ENCODE measurements at regions of chr14 and their contacts with region 1.

Region 1: GRCh38 chr14:71855399-71856036 is 76.7 kb upstream of the RGS6 start:
- DNase-seq: peak in 1 of 2 experiments; percentile 58
- H3K4me3 ChIP-seq: no peak overlapping the region
- H3K27ac ChIP-seq: no peak overlapping the region
- H3K4me1 ChIP-seq: no peaks in the 10 kb centered on the region
- H3K27me3 ChIP-seq: no peaks in the 10 kb centered on the region
- CTCF ChIP-seq: peak; percentile 73

Region 2: DNA sequence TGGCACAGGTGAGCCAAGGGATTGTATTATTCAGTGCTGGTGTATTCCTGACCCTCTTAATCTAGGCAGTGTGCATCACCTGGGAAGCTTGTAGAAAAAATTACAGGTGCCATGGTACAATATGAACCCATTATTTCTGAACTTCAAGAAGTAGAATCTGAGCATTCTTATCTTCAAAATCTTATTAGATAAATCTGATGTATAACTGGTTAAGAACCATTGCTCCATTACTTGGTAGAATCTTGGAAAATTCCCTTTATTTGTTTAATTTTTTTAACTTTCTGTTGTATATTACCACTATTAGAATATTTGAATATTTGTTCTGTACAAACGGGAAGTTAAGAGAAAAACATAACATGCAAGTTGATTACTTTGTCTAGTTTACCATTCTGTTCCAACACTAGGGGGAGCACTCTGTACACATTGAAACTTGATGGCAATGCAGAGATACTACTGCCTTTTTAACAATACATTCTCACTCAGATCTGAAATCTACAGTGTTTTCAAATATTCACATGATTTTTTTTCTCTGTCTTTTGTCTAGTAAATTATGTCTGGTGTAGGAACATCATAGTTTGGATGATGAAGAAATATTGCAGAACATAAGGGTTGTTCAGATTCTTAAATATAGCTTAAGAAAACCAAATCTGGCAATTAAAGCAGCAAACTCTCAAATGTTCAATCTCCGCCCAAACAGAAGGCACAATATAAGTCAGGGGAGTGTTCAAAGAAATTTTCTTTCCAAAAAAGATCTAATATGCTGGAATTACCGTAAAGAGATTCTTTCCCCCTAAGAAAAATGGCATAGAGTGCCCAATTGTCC is 751.6 kb before region 1 on chr14:
- CTCF ChIA-PET with region 1: interaction called, 4 read pairs
- POLR2A ChIA-PET with region 1: no interaction called
- intact Hi-C with region 1: loop called (anchors 10 kb)
- DNase-seq: peak in 1 of 2 experiments; percentile 63
- H3K4me3 ChIP-seq: no peak overlapping the region
- H3K27ac ChIP-seq: no peak overlapping the region
- H3K4me1 ChIP-seq: no peaks in the 10 kb centered on the region
- H3K27me3 ChIP-seq: no peaks in the 10 kb centered on the region
- CTCF ChIP-seq: peak; percentile 97

Region 3: GRCh38 chr14:71382288-71382687 is 473.2 kb before region 1 on chr14:
- CTCF ChIA-PET with region 1: no interaction called
- POLR2A ChIA-PET with region 1: no interaction called
- intact Hi-C with region 1: no loop called
- DNase-seq: no peak
- H3K4me3 ChIP-seq: no peak overlapping the region
- H3K27ac ChIP-seq: no peak overlapping the region
- H3K4me1 ChIP-seq: no peaks in the 10 kb centered on the region; the same call in 1 of the 2 replicates
- H3K27me3 ChIP-seq: no peaks in the 10 kb centered on the region
- CTCF ChIP-seq: no peak

Region 4: GRCh38 chr14:71472043-71472960 is 383.2 kb before region 1 on chr14:
- CTCF ChIA-PET with region 1: no interaction called
- POLR2A ChIA-PET with region 1: no interaction called
- intact Hi-C with region 1: no loop called
- DNase-seq: no peak
- H3K4me3 ChIP-seq: no peak overlapping the region
- H3K27ac ChIP-seq: no peak overlapping the region
- H3K4me1 ChIP-seq: no peaks in the 10 kb centered on the region
- H3K27me3 ChIP-seq: no peaks in the 10 kb centered on the region
- CTCF ChIP-seq: no peak

Region 5: DNA sequence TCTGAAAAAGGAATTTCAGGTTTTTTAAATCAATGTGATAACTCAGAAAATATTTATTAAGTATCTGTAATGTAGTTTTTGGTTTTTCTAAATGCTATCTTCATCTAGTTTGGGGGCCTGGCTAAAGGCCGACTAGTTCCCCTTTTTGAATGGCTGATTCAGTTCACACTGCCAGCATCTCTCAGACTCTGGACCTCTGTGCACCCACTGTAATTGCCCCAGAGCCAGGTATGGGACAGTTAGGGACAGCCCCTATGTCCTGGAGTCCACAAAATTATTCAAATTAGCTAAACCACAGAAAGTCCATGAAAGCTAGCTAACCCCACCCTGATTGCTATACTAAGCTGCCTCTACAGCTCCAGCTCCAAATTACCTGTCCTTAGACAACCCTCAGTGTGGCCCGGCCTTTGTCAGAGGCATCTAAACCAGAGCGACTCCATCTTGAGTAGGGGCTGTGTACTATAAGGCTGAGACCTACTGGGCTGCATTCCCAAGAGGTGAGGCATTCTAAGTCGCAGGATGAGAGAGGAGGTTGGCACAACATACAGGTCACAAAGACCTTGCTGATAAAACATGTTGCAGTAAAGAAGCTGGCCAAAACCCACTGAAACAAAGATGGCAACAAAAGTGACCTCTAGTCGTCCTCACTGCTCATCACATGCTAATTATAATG is 27.7 kb after region 1 on chr14:
- CTCF ChIA-PET with region 1: no interaction called
- POLR2A ChIA-PET with region 1: no interaction called
- intact Hi-C with region 1: no loop called
- DNase-seq: peak in 1 of 2 experiments; percentile 46
- H3K4me3 ChIP-seq: no peak overlapping the region
- H3K27ac ChIP-seq: no peak overlapping the region
- H3K4me1 ChIP-seq: no peaks in the 10 kb centered on the region
- H3K27me3 ChIP-seq: no peaks in the 10 kb centered on the region; the same call in 1 of the 2 replicates
- CTCF ChIP-seq: no peak

Measured in PC-9 (cell line).